ENCODE measurements at regions of chr15 and their contacts with region 1.

Region 1: DNA sequence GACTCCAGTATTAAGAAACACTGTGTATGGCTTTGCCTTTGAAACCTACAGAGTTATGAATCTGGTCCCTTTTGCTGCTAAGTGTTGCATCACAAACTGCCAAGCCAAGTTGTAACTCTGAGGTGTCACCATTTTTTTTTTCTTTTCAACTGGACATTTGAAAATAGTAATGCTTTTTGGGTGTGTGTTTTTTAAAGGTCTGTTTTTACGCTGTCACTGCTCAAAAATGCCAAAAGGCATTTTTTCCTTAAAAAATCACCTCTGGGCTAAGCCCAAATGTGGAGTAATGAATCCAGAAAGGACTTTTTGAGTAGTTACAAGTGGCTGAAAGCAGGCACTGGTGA is 9.5 kb downstream of the SMAD3 start:
- DNase-seq: no peak
- ATAC-seq: no peak
- H3K4me3 ChIP-seq: no peak overlapping the region
- H3K27ac ChIP-seq: no peak overlapping the region
- H3K4me1 ChIP-seq: peaks cover 6 to 7% of the 10 kb centered on the region in 2 donors
- H3K27me3 ChIP-seq: no peaks in the 10 kb centered on the region

Region 2: GRCh38 chr15:66966257-66966656 is 108.6 kb before region 1 on chr15:
- intact Hi-C with region 1: no loop called
- DNase-seq: no peak
- ATAC-seq: no peak
- H3K4me3 ChIP-seq: no peak overlapping the region
- H3K27ac ChIP-seq: no peak overlapping the region
- H3K4me1 ChIP-seq: no peaks in the 10 kb centered on the region
- H3K27me3 ChIP-seq: no peaks in the 10 kb centered on the region

Region 3: DNA sequence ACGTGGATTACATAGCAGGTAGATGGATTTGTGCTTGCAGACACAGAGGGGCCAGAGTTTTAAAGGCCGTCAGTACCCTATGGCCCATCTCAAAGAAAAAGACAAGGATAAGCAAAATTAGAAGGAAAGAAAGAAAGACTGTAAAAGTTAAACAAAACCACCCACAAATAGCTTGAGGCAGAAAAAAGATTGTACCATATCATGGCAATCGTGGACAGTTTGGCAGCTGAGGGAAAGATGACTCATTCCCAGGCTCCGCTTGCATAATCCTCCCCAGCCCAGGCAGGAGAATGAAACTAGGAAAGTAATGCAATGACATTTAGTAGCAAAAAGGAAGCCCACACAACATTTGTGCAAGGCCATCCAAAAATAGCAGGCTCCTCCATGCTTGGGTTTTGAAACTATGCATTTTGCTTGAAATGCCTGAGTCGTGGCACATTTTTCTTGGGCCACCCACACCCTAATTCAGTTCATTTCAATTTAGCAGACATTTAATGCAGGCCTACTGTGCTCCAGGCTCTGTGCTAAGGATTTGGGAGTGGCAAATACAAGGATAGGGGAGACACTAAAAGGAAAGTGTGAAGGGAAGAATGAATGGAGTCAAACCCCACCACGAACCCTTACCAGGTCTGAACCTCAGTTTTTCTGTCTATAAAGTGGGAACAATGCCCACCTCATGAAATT is 50.4 kb before region 1 on chr15:
- intact Hi-C with region 1: loop called in 1 of 2 experiments (anchors 5 kb)
- DNase-seq: peak in 1 of 2 donors; percentile 89
- ATAC-seq: peak; percentile 92
- H3K4me3 ChIP-seq: no peak overlapping the region
- H3K27ac ChIP-seq: peak overlapping the region in 1 of 2 donors; percentile 78
- H3K4me1 ChIP-seq: peaks cover 3 to 9% of the 10 kb centered on the region in 2 donors
- H3K27me3 ChIP-seq: no peaks in the 10 kb centered on the region

Region 4: GRCh38 chr15:67109141-67110034 is 34.5 kb after region 1 on chr15:
- intact Hi-C with region 1: no loop called
- DNase-seq: peak; percentile 88 to 91
- ATAC-seq: peak; percentile 75
- H3K4me3 ChIP-seq: no peak overlapping the region
- H3K27ac ChIP-seq: no peak overlapping the region
- H3K4me1 ChIP-seq: peaks cover 8 to 9% of the 10 kb centered on the region in 2 donors
- H3K27me3 ChIP-seq: no peaks in the 10 kb centered on the region

Measured in aorta (tissue), 5 donors.